Activated CD4-positive, alpha-beta T cell treated with anti-CD3 and anti-CD28 coated beads for 36 hours (primary cell): ENCODE measurements at regions of chr11 and their contacts with region 1.

Region 1: DNA sequence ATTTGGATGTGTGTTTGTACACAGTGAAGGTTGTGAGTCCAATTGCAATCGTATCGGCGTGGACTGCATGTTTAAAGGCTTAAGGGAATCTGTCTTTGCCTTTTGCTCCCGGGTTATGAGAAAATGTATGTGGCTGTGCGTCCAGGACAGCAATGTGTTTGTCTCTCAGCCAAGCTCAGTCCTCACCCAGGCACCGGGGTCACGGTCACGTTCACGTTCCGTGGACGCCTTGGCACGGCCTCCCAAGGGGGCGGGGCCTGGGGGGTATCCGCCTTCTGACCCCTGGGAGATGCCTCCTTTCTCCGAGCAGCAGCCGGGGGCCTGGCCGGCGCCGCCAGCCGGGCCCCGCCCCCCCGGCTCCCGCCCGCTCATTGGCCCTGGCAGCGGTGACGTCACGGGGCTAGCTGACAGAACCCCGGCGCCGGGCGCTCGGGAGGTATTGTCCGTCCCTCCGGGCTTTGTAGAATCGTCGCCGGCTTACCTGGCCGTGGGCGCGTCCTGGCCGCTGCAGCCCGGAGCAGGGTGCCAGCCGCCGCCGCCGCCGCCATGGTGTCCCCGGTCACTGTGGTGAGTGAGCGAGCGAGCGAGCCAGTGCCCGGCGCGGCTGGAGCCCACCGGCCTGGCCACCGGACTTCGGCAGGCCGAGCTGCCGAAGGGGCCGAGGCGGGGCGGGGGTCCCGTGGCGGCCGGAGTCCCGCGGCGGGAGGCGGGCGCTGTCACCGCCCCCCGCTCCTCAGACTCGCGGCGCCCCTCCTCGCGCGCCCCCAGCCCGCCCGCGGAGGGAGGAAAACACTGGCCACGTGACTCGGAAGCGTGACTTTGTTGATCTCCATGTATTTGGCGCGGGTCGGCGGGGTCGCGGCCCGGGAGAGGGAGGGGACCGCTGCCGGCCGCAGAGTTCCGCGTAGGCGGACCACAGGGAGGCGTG is at the start of gene TMEM86A:
- DNase-seq: peak; percentile 93
- ATAC-seq: peak; percentile 96
- H3K4me3 Mint-ChIP-seq: peak within 1 kb of the TSS; percentile 72
- H3K27ac Mint-ChIP-seq: peak within 1 kb of the TSS; percentile 69
- H3K4me1 Mint-ChIP-seq: peaks cover 13% of the 10 kb centered on the region
- H3K27me3 Mint-ChIP-seq: peaks cover 3% of the 10 kb centered on the region
- total RNA-seq, gene TMEM86A: 0.09 to 0.26 TPM

Region 2: DNA sequence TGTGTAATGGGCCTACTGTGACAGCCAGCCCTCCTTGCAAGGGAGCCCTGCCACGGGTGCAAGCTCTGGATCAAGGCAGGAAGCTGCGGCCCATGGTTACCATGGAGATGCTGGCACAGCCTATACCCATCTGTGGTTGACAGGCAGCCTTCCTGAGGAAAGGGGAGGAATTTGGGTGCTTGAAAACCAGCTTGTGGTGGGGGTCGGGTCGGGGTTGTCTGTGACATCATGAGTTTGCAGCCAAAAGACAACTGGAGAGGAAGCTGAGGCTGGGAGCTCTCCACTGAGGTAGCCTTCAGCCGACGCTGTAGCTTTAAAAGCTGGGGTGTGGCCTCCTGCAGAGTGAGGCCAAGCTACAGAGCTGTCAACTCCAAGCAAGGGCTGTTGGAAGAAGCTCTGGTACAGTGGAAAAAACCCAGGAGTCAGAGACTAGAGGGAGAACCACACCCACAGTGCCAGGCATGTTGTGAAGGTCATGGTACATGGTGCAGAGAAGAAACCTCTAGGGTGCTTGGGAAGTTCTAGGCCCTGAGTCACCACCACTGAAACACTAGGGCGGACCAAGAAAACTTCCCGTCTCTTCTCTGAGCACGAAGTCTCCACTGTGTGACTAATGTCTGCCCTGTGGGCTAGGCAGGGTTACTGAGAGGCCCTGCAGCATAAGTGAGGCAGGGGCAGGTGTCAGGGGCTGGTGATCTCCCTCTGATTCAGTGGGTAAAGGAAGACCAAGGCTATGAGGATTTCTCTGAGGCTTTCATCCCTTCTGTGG is 315.0 kb before region 1 on chr11:
- CTCF ChIA-PET with region 1: interaction called, 4 read pairs
- POLR2A ChIA-PET with region 1: no interaction called
- intact Hi-C with region 1: loop called in 1 of 2 experiments (anchors 2 kb)
- DNase-seq: peak; percentile 89
- ATAC-seq: peak; percentile 96
- H3K4me3 Mint-ChIP-seq: peak overlapping the region; percentile 59
- H3K27ac Mint-ChIP-seq: peak overlapping the region; percentile 98
- H3K4me1 Mint-ChIP-seq: peaks cover 42% of the 10 kb centered on the region
- H3K27me3 Mint-ChIP-seq: no peaks in the 10 kb centered on the region

Region 3: DNA sequence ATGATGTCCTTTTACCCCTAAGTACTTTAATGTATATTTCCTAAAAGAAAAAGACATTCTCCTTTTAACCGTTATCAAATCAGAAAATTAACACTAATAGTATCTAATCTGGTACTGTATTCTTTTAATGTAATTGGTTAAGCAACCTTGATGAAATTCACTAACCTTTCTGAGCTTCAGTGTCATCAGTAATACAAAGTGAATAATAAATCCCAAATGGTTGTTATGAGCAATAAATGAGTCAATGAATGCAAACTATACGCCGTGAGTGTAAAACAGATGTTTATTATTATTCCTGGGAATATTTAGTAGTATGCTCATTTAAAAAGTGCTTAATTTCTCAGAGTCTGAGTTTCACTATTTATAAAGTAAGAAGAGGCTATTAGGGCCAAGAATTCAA is 131.5 kb before region 1 on chr11:
- CTCF ChIA-PET with region 1: no interaction called
- POLR2A ChIA-PET with region 1: no interaction called
- intact Hi-C with region 1: no loop called
- DNase-seq: no peak
- ATAC-seq: no peak
- H3K4me3 Mint-ChIP-seq: no peak overlapping the region
- H3K27ac Mint-ChIP-seq: no peak overlapping the region
- H3K4me1 Mint-ChIP-seq: no peaks in the 10 kb centered on the region
- H3K27me3 Mint-ChIP-seq: no peaks in the 10 kb centered on the region

Region 4: DNA sequence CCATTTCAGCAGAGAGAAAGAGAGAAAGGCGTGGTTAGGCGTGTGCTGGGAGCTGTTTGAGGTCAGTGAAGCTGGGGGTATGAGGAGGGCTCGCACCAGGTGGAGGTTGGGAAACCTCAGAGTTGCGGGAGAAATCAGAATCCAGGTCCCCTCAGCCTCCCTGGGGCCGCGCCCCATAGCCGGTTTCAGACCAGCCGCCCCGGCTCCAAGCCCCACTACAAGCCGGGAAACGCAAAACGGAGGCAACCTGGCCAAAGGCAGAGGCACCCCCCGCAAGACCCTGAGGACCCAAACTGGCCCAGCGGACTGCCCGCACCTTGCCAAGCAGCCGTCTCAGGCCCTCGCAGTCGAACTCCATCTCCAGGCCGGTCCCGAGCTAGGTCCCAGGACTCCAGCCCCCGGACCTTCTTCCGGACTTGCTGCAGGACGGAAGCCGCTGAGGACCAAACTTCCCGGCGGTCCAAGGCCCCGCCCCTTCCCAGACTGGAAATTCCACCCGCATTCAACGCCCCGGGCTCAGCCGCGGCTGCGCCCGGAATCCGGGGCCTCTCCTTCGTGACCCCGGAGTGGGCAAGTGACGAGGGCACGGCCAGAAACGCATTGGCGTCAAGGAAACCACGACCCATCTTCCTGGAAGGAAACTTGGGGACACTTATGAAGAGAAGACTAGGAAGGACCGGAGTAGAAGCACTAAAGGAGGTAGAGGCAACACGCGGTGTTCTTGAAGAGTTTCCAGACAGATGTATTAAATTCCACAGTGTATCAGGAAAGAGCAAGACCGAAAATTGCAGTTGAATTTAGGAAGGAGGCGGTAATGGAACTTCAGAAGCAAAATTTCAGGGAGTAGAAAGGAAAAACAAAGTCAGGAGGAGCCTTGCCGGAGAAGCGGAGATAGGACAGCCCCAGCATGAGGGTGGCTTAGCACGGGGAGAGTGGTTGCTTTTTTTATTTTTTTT is 110.0 kb before region 1 on chr11 and contains the start of gene UEVLD:
- CTCF ChIA-PET with region 1: interaction called, 3 read pairs
- POLR2A ChIA-PET with region 1: no interaction called
- intact Hi-C with region 1: loop called in 1 of 2 experiments (anchors 2 kb)
- DNase-seq: peak; percentile 79
- ATAC-seq: peak; percentile 54
- H3K4me3 Mint-ChIP-seq: no peak within 1 kb of the TSS
- H3K27ac Mint-ChIP-seq: no peak within 1 kb of the TSS
- H3K4me1 Mint-ChIP-seq: peaks cover 12% of the 10 kb centered on the region
- H3K27me3 Mint-ChIP-seq: no peaks in the 10 kb centered on the region
- total RNA-seq, gene UEVLD: 14.3 to 16.0 TPM

Region 5: GRCh38 chr11:18669220-18669598 is 29.4 kb before region 1 on chr11:
- CTCF ChIA-PET with region 1: no interaction called
- POLR2A ChIA-PET with region 1: no interaction called
- intact Hi-C with region 1: loop called in 1 of 2 experiments (anchors 2 kb)
- DNase-seq: peak; percentile 26
- ATAC-seq: peak; percentile 51
- H3K4me3 Mint-ChIP-seq: no peak overlapping the region
- H3K27ac Mint-ChIP-seq: no peak overlapping the region
- H3K4me1 Mint-ChIP-seq: peaks cover 42% of the 10 kb centered on the region
- H3K27me3 Mint-ChIP-seq: no peaks in the 10 kb centered on the region